Activated B cell treated with CpG ODN at 0.5 μM for 24 hours (primary cell): ENCODE measurements at regions of chr1 and their contacts with region 1.

Region 1: GRCh38 chr1:100184536-100184935 is 6.5 kb upstream of the LRRC39 start:
- DNase-seq: no peak
- ATAC-seq: peak; percentile 99
- H3K4me3 Mint-ChIP-seq: no peak overlapping the region
- H3K27ac Mint-ChIP-seq: peak overlapping the region; percentile 75
- H3K4me1 Mint-ChIP-seq: peaks cover 15% of the 10 kb centered on the region
- H3K27me3 Mint-ChIP-seq: no peaks in the 10 kb centered on the region
- CTCF ChIP-seq: no peak

Region 2: DNA sequence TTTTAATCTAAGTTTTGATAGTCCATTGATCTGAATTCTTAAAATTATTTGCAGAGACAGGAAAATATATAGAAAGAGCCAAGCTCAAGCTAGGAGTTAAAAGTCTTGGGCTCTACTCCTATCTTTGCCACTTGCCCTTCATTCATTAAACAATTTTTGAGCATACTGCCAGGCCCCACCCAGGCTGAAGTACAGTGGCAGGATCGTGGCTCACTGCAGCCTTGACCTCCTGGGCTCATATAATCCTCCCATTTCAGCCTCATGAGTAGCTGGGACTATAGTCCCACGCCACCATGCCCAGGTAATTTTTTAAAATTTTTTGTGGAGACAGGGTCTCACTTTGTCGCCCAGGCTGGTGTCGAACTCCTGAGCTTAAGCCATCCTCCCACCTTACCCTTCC is 43.3 kb before region 1 on chr1:
- CTCF ChIA-PET with region 1: no interaction called
- POLR2A ChIA-PET with region 1: no interaction called
- intact Hi-C with region 1: no loop called
- DNase-seq: no peak
- ATAC-seq: no peak
- H3K4me3 Mint-ChIP-seq: no peak overlapping the region
- H3K27ac Mint-ChIP-seq: no peak overlapping the region
- H3K4me1 Mint-ChIP-seq: no peaks in the 10 kb centered on the region
- H3K27me3 Mint-ChIP-seq: no peaks in the 10 kb centered on the region
- CTCF ChIP-seq: no peak

Region 3: DNA sequence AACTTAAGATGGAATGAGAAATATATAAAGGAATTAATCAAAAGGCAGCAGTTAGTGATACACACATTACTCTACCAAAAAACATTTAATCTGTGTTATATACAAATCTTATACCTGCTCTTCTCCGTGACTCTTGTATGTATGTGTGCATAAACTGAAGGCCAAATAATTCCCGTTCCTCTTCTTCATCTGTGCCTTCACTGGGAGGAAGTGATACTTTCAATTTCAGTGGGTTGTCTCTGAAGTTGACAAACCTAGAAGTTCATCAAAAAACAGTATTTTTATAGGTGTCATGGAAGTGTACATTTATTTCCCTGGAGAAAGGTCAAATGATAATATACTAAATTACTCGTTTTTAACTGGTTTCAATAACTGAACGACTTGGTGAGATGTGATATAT is 32.3 kb before region 1 on chr1:
- CTCF ChIA-PET with region 1: no interaction called
- POLR2A ChIA-PET with region 1: no interaction called
- intact Hi-C with region 1: loop called (anchors 1 kb)
- DNase-seq: no peak
- ATAC-seq: peak; percentile 47
- H3K4me3 Mint-ChIP-seq: no peak overlapping the region
- H3K27ac Mint-ChIP-seq: peak overlapping the region; percentile 50
- H3K4me1 Mint-ChIP-seq: peaks cover 13% of the 10 kb centered on the region
- H3K27me3 Mint-ChIP-seq: no peaks in the 10 kb centered on the region
- CTCF ChIP-seq: no peak

Region 4: DNA sequence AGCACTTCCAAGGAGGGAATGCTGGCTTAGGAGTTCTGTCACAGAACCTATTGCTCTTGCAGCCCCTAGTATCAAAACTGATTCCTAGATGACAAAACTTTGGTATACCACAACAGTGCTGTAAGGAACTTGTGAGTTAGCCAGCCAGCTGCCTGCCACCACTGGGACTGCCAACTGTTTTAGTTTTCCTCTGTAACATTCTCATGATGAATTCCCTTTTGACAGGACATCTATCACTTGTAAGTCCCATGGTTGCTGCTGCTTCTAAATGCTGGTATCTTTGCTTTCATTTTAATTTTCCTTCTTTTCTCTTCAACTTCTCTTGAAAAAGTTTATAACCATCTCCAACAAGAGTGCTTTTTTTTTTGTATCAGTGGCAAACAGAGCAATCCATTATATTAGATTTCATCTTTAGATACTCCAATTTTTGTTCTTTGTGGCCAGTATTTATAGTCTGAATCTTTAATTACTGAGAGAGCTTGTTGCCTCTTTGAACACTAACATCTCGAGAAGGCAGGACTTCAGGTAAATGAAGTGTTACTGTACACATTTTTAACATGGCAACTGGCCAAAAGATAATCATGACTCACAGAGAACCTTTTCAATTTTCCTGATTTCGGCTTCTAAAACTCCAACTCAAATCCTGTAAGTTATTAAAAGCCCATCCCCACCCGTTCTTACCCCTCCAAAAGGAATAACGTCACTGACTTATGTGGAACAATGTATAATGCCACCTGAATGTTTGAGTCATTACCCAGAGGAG is 45.3 kb after region 1 on chr1:
- CTCF ChIA-PET with region 1: no interaction called
- POLR2A ChIA-PET with region 1: no interaction called
- intact Hi-C with region 1: no loop called
- DNase-seq: no peak
- ATAC-seq: no peak
- H3K4me3 Mint-ChIP-seq: no peak overlapping the region
- H3K27ac Mint-ChIP-seq: no peak overlapping the region
- H3K4me1 Mint-ChIP-seq: no peaks in the 10 kb centered on the region
- H3K27me3 Mint-ChIP-seq: no peaks in the 10 kb centered on the region
- CTCF ChIP-seq: no peak

Region 5: DNA sequence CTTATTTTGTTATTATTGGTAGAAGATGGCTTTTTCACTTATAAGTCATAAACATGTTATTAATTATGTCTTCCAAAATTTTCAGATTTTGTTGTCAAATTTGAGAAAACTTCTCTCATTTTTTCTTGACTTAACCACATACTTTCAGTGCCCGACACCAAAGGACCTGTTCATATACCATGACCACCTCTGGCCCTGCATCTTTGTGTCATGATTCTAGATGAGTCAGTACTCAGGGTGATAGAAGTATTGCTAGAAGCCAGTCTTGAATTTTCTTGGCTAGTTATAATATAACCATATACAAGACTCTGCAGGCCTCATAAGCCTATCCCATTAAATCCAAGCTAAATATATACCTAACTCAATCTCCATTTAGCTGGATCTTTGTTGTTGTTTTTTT is 876.5 kb after region 1 on chr1:
- CTCF ChIA-PET with region 1: no interaction called
- POLR2A ChIA-PET with region 1: no interaction called
- intact Hi-C with region 1: no loop called
- DNase-seq: no peak
- ATAC-seq: peak; percentile 68
- H3K4me3 Mint-ChIP-seq: no peak overlapping the region
- H3K27ac Mint-ChIP-seq: peak overlapping the region; percentile 72
- H3K4me1 Mint-ChIP-seq: peaks cover 61% of the 10 kb centered on the region
- H3K27me3 Mint-ChIP-seq: no peaks in the 10 kb centered on the region
- CTCF ChIP-seq: no peak